ENCODE measurements at regions of chr16 and their contacts with region 1.

Region 1: DNA sequence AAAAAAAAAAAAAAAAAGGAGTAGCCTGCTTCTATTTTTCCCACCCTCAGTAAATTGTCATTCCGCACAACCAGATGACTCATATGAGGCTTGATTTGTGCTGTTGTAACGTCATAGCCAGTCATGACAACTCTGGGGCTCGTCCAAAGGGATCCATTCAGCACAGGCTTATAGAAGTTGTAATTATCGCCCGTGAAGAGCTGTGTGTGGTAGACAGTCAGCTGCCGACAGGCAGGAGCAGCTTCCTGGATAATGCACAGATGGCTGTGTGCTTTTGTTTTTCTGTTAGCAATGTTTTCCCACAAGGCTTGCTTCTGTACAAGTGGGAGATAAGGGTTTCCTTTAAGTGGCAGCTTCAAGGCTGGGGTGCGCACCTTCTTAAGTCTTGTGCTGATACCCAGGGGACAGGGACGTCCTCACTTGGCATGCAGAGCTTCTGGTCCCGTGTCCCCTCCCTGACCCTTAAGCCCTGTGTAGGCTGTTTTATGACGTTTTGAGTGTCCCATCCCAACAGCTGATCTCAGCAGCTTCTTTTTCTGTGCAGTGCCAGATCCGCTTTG is 26.0 kb downstream of the SNX29 start:
- DNase-seq: no peak
- H3K4me3 ChIP-seq: no peak overlapping the region
- H3K27ac ChIP-seq: no peak overlapping the region
- H3K4me1 ChIP-seq: no peaks in the 10 kb centered on the region
- H3K27me3 ChIP-seq: no peaks in the 10 kb centered on the region
- CTCF ChIP-seq: no peak

Region 2: DNA sequence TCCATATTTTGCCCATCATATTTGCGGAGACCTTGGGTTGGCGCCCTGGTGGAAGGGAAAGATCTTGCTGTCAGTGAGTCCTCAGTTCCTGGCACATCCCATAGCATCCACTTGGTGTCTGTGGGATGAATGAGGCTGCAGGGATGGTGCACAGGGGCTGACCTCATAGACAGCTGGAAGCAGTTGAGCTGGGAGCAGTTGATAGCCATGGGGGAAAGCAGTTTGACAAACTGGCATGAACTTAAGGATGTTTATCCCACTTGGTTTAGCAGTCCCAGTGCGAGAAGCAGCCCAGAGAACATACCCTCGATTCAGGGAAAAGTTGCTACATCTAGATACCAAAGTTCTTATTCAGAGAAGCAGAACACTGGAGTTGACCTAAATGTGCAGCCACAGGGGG is 54.7 kb after region 1 on chr16:
- CTCF ChIA-PET with region 1: no interaction called
- dilution Hi-C with region 1: loop called (anchors 10 kb)
- in situ Hi-C with region 1: no loop called
- intact Hi-C with region 1: no loop called
- DNase-seq: no peak
- H3K4me3 ChIP-seq: no peak overlapping the region
- H3K27ac ChIP-seq: no peak overlapping the region
- H3K4me1 ChIP-seq: peaks cover 12% of the 10 kb centered on the region
- H3K27me3 ChIP-seq: no peaks in the 10 kb centered on the region
- CTCF ChIP-seq: no peak